GM13976 (cell line): ENCODE measurements at regions of chr19 and their contacts with region 1.

Region 1: DNA sequence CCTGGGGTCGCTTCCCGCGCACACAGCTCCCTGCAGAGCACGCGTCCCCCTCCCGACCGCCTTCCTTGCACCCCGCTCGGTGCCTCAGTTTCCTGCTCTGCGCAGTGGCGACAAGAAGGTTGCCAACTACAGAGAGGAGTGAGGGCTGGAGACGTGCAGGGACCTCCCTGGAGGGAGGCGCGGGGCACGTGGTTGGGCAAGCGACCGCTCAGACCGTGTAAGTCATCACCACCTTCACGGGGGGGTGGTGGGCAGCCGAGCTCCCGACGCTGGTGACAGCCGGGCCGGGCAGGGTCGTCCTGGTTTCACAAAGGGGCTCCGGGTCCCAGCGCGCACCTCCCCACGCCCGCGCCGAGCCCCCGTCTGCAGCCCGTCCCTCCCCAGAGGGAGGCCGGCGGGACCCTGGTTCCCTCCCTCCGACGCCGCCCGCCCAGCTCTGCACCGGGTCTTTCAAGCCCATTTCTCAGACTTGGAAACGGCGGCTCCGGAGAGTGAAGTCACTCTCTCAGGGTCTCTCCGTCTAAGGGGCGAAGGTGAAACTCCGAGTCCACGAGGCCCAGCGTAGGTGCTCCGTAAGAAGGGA is 801 bp upstream of the ARID3A start:
- DNase-seq: peak; percentile 74
- CTCF ChIP-seq: no peak

Region 2: GRCh38 chr19:989381-990119 is 64.5 kb after region 1 on chr19:
- in situ Hi-C with region 1: loop called (anchors 5 kb)
- DNase-seq: no peak
- CTCF ChIP-seq: peak; percentile 15